Heart right ventricle (tissue), 16 donors: ENCODE measurements at regions of chr19 and their contacts with region 1.

Region 1: GRCh38 chr19:39328046-39328705 is 7.5 kb upstream of the LRFN1 start:
- DNase-seq: peak; percentile 82 to 85
- ATAC-seq: peak; percentile 61 to 88 (median 80)
- H3K4me3 ChIP-seq: no peak overlapping the region
- H3K27ac ChIP-seq: no peak overlapping the region
- H3K4me1 ChIP-seq: peaks cover 0 to 16% (median 5%) of the 10 kb centered on the region in 9 donors
- H3K27me3 ChIP-seq: peaks cover 0 to 5% (median 0%) of the 10 kb centered on the region in 7 donors
- CTCF ChIP-seq: peak; percentile 83 to 98 (median 95)

Region 2: GRCh38 chr19:38964738-38965137 is 363.4 kb before region 1 on chr19:
- intact Hi-C with region 1: loop called in 4 of 10 experiments (anchors 5 to 10 kb)
- DNase-seq: no peak
- ATAC-seq: no peak
- H3K4me3 ChIP-seq: no peak overlapping the region
- H3K27ac ChIP-seq: no peak overlapping the region
- H3K4me1 ChIP-seq: peaks cover 0 to 11% (median 3%) of the 10 kb centered on the region in 9 donors
- H3K27me3 ChIP-seq: no peaks in the 10 kb centered on the region
- CTCF ChIP-seq: no peak

Region 3: GRCh38 chr19:39052243-39052746 is 275.9 kb before region 1 on chr19:
- intact Hi-C with region 1: loop called in 1 of 10 experiments (anchors 5 kb)
- DNase-seq: peak; percentile 11 to 55
- ATAC-seq: peak in 4 of 8 donors; percentile 33 to 53 (median 40)
- H3K4me3 ChIP-seq: no peak overlapping the region
- H3K27ac ChIP-seq: no peak overlapping the region
- H3K4me1 ChIP-seq: no peaks in the 10 kb centered on the region
- H3K27me3 ChIP-seq: peaks cover 0 to 17% (median 6%) of the 10 kb centered on the region in 7 donors
- CTCF ChIP-seq: peak; percentile 54 to 91 (median 71)

Region 4: DNA sequence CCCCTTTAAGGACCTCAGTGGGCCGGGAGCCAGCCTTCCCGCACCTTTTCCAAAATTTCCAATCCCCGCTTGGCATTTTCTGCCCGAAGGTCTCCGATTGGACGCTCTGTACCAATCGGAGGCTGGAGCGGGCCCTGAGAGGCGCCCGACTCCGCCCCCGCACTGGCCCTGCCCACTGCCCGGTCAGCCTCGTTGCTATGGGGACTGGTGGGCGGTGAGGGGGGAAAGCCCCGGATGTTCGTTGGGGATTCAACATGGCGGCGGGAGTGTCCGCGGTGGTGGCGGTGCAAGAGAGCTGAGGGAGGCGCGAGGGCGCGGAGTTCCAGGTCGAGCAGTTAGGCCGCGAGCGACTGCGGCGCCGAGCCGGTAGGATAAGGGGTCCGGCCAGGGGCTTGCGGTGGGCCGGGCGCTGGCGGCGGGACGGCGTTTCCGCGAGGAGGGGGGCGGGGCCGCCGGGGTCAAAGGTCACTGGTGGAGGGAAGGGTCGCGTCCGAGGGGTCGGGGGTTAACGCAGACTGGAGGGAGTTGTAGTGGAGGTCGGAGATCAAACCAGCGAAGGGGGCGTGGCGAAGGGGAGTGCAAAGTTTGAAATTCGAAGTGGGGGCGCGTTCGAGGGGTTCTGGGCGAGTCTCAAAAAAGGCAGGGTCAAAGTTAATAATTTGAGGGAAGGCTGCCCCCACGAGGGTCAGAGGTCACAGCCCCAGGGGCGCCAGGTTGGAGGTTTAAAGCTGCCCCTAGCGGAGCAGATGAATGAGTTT is 202.4 kb before region 1 on chr19 and contains the start of gene PAK4:
- intact Hi-C with region 1: loop called in 9 of 10 experiments (anchors 1 to 5 kb)
- DNase-seq: peak; percentile 96 to 98
- ATAC-seq: peak; percentile 99 to 100 (median 100)
- H3K4me3 ChIP-seq: peak within 1 kb of the TSS; percentile 45 to 85 (median 80)
- H3K27ac ChIP-seq: peak within 1 kb of the TSS in 9 of 10 donors; percentile 50 to 89 (median 83)
- H3K4me1 ChIP-seq: peaks cover 2 to 61% (median 31%) of the 10 kb centered on the region in 9 donors
- H3K27me3 ChIP-seq: peaks cover 0 to 11% (median 5%) of the 10 kb centered on the region in 7 donors
- CTCF ChIP-seq: no peak
- total RNA-seq, gene PAK4: 11.7 to 22.4 (median 16.1) TPM

Region 5: DNA sequence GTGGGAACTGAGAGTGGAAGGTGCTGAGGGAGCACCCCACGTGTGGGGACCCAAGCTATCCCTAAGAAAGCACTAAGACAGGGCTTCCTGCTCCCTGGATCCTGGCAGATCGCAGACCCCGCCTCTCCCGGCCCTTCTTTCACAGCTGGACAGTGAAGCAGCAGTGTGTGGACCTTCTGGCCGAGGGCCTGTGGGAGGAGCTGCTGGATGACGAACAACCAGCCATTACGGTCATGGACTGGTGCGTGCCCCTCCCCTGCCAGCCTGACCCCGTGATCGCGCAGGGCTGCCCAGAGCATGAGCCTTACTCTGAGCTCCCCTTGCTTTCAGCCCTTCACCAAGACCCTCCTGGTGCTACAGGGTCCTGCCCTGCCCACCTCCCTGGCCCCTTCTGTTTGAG is 129.2 kb before region 1 on chr19:
- intact Hi-C with region 1: loop called in 2 of 10 experiments (anchors 10 kb)
- DNase-seq: no peak
- ATAC-seq: peak in 3 of 8 donors; percentile 52 to 58 (median 56)
- H3K4me3 ChIP-seq: no peak overlapping the region
- H3K27ac ChIP-seq: no peak overlapping the region
- H3K4me1 ChIP-seq: peaks cover 0 to 5% (median 0%) of the 10 kb centered on the region in 9 donors
- H3K27me3 ChIP-seq: peaks cover 15 to 99% (median 97%) of the 10 kb centered on the region in 7 donors
- CTCF ChIP-seq: no peak

Region 6: GRCh38 chr19:39297654-39298634 is 30.2 kb before region 1 on chr19:
- intact Hi-C with region 1: no loop called
- DNase-seq: peak in 1 of 2 donors; percentile 23
- ATAC-seq: peak in 2 of 8 donors; percentile 57 to 75
- H3K4me3 ChIP-seq: no peak overlapping the region
- H3K27ac ChIP-seq: no peak overlapping the region
- H3K4me1 ChIP-seq: no peaks in the 10 kb centered on the region
- H3K27me3 ChIP-seq: peaks cover 0 to 71% (median 42%) of the 10 kb centered on the region in 7 donors
- CTCF ChIP-seq: no peak

Region 7: GRCh38 chr19:39411832-39412099 is 83.6 kb after region 1 on chr19:
- intact Hi-C with region 1: no loop called
- DNase-seq: peak; percentile 90 to 92
- ATAC-seq: peak; percentile 19 to 56 (median 38)
- H3K4me3 ChIP-seq: peak overlapping the region in 9 of 10 donors; percentile 67 to 98 (median 86)
- H3K27ac ChIP-seq: peak overlapping the region; percentile 94 to 100 (median 99)
- H3K4me1 ChIP-seq: peaks cover 11 to 66% (median 51%) of the 10 kb centered on the region in 9 donors
- H3K27me3 ChIP-seq: no peaks in the 10 kb centered on the region
- CTCF ChIP-seq: peak; percentile 85 to 98 (median 94)